ENCODE measurements at regions of chr19 and their contacts with region 1.

Region 1: GRCh38 chr19:5376928-5377327 is 36.3 kb upstream of the PTPRS start:
- DNase-seq: no peak
- H3K4me3 ChIP-seq: no peak overlapping the region
- H3K27ac ChIP-seq: no peak overlapping the region
- H3K4me1 ChIP-seq: no peaks in the 10 kb centered on the region
- H3K27me3 ChIP-seq: peaks cover 0 to 5% (median 3%) of the 10 kb centered on the region in 4 experiments; a peak in 4 of 7 replicates
- CTCF ChIP-seq: no peak
- EP300 ChIP-seq: no peak
- POLR2A ChIP-seq: no peak
- RAD21 ChIP-seq: no peak

Region 2: DNA sequence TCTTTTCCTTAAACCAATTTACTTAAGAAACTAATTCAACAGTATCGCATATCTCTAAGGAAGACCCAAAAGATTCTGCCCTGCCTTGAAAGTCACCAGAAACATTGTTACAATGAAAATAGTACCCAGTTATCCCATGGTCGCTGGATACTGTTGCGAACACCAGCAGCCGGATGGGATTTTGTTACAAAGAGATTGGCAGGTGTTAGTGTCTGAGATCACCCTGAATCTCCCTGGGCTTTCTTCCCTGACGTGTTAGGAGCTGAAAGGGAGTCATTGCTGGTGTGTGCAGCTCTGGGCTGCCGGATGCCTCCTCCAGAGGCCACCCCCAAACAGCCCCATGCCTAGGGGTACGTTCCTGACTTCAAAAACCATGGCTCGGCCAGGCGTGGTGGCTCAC is 74.5 kb before region 1 on chr19:
- CTCF ChIA-PET with region 1: no interaction called
- POLR2A ChIA-PET with region 1: no interaction called
- DNase-seq: no peak
- H3K4me3 ChIP-seq: no peak overlapping the region
- H3K27ac ChIP-seq: no peak overlapping the region
- H3K4me1 ChIP-seq: peaks cover 0 to 5% (median 3%) of the 10 kb centered on the region in 4 experiments; a peak in 4 of 7 replicates
- H3K27me3 ChIP-seq: no peaks in the 10 kb centered on the region
- CTCF ChIP-seq: no peak
- EP300 ChIP-seq: no peak
- POLR2A ChIP-seq: no peak
- RAD21 ChIP-seq: no peak

Region 3: GRCh38 chr19:5397804-5398692 is 21.1 kb after region 1 on chr19:
- CTCF ChIA-PET with region 1: interaction called, 13 read pairs
- POLR2A ChIA-PET with region 1: interaction called, 3 read pairs
- DNase-seq: peak; percentile 13 to 68
- H3K4me3 ChIP-seq: peak overlapping the region in 2 of 4 experiments; percentile 23 to 37; a peak in 3 of 8 replicates
- H3K27ac ChIP-seq: no peak overlapping the region
- H3K4me1 ChIP-seq: peaks cover 0 to 28% (median 6%) of the 10 kb centered on the region in 4 experiments; a peak in 5 of 7 replicates
- H3K27me3 ChIP-seq: no peaks in the 10 kb centered on the region; a peak in 1 of 7 replicates
- CTCF ChIP-seq: peak in 1 of 3 experiments; percentile 18; a peak in 1 of 4 replicates
- EP300 ChIP-seq: no peak
- POLR2A ChIP-seq: no peak
- RAD21 ChIP-seq: no peak

Region 4: GRCh38 chr19:5480427-5480836 is 103.5 kb after region 1 on chr19:
- CTCF ChIA-PET with region 1: interaction called, 11 read pairs
- POLR2A ChIA-PET with region 1: no interaction called
- DNase-seq: peak; percentile 19 to 80
- H3K4me3 ChIP-seq: no peak overlapping the region
- H3K27ac ChIP-seq: no peak overlapping the region
- H3K4me1 ChIP-seq: peaks cover 0 to 7% (median 0%) of the 10 kb centered on the region in 4 experiments; a peak in 2 of 7 replicates
- H3K27me3 ChIP-seq: peaks cover 0 to 4% (median 0%) of the 10 kb centered on the region in 4 experiments; a peak in 3 of 7 replicates
- CTCF ChIP-seq: peak; percentile 59 to 79 (median 76)
- EP300 ChIP-seq: no peak
- POLR2A ChIP-seq: no peak
- RAD21 ChIP-seq: peak; percentile 47 to 52; a peak in 3 of 4 replicates